Ovary (tissue), 10 donors: ENCODE measurements at regions of chr12 and their contacts with region 1.

Region 1: GRCh38 chr12:131266591-131267467 is 313.1 kb downstream of the ADGRD1 start:
- DNase-seq: peak in 3 of 5 donors; percentile 22 to 58 (median 47)
- H3K4me3 ChIP-seq: no peak overlapping the region
- H3K27ac ChIP-seq: peak overlapping the region in 1 of 2 donors; percentile 34
- H3K4me1 ChIP-seq: no peaks in the 10 kb centered on the region
- H3K27me3 ChIP-seq: no peaks in the 10 kb centered on the region
- CTCF ChIP-seq: no peak
- EP300 ChIP-seq: no peak
- POLR2A ChIP-seq: no peak

Region 2: GRCh38 chr12:131068048-131068892 is 198.6 kb before region 1 on chr12:
- intact Hi-C with region 1: no loop called
- DNase-seq: peak in 1 of 5 donors; percentile 42
- H3K4me3 ChIP-seq: no peak overlapping the region
- H3K27ac ChIP-seq: peak overlapping the region in 1 of 2 donors; percentile 59
- H3K4me1 ChIP-seq: peaks cover 5% of the 10 kb centered on the region
- H3K27me3 ChIP-seq: no peaks in the 10 kb centered on the region
- CTCF ChIP-seq: no peak
- EP300 ChIP-seq: no peak
- POLR2A ChIP-seq: no peak

Region 3: DNA sequence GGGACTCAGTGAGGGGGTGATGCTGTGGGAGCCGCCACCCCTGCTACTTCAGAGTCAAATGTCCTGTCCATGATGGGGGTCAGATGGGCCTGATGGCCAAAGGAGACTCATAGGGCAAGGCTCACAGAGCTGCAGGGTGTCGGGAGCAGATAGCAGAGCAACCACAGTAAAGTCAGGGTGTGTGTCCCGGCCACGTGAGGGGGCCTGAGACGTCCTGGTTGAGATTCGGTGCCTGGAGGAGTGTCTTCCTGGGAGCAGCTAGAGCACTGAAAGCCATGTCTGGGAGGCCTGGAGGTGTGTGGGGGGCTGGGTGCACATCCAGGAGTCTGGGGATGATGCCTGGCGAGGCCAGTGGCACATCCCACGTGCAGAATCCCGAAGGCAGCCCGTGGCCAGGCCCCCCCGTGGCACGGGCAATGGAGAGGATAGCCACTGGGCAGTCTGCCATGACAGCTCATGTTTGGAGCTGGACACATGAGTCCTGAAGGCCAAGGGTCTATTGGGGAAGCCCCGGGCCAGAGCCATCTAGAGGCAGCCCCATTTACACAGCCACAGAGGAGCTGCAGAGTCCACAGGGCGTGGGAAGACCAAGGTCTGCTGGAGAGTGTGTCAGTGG is 136.1 kb after region 1 on chr12:
- intact Hi-C with region 1: loop called in 1 of 4 experiments (anchors 1 kb)
- DNase-seq: peak; percentile 43 to 73 (median 55)
- H3K4me3 ChIP-seq: no peak overlapping the region
- H3K27ac ChIP-seq: peak overlapping the region; percentile 59 to 83
- H3K4me1 ChIP-seq: peaks cover 21% of the 10 kb centered on the region
- H3K27me3 ChIP-seq: no peaks in the 10 kb centered on the region
- CTCF ChIP-seq: no peak
- EP300 ChIP-seq: no peak
- POLR2A ChIP-seq: no peak

Region 4: DNA sequence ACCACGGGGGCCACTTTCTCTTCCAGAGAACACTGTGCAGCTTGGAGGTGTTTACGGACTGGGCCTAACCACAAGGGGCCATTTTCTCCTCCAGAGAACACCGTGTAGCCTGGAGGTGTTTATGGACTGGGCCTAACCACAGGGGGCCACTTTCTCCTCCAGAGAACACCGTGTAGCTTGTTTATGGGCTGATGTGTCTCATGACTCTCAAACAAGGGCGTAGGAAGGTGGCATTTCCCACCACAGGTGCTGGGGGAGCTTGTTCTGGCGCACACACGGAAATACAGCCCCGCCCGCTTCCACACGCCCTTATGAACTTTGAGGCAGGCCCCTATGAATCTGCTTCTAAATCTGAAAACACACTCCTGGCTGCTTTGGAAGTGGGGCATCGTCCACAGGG is 269.5 kb after region 1 on chr12:
- intact Hi-C with region 1: no loop called
- DNase-seq: no peak
- H3K4me3 ChIP-seq: no peak overlapping the region
- H3K27ac ChIP-seq: no peak overlapping the region
- H3K4me1 ChIP-seq: no peaks in the 10 kb centered on the region
- H3K27me3 ChIP-seq: no peaks in the 10 kb centered on the region
- CTCF ChIP-seq: no peak
- EP300 ChIP-seq: no peak
- POLR2A ChIP-seq: no peak